Heart right ventricle (tissue), 16 donors: ENCODE measurements at regions of chr1 and their contacts with region 1.

Region 1: GRCh38 chr1:47997289-47998200 is at the start of gene TRABD2B:
- DNase-seq: peak; percentile 76 to 84
- ATAC-seq: peak; percentile 81 to 90 (median 87)
- H3K4me3 ChIP-seq: peak within 1 kb of the TSS; percentile 35 to 72 (median 62)
- H3K27ac ChIP-seq: peak within 1 kb of the TSS in 9 of 10 donors; percentile 22 to 69 (median 62)
- H3K4me1 ChIP-seq: peaks cover 0 to 22% (median 12%) of the 10 kb centered on the region in 9 donors
- H3K27me3 ChIP-seq: peaks cover 3 to 69% (median 45%) of the 10 kb centered on the region in 7 donors
- CTCF ChIP-seq: peak; percentile 90 to 99 (median 95)
- total RNA-seq, gene TRABD2B: 0.21 to 1.1 (median 0.53) TPM

Region 2: GRCh38 chr1:47738560-47739182 is 258.9 kb before region 1 on chr1:
- intact Hi-C with region 1: loop called in 4 of 10 experiments (anchors 5 to 10 kb)
- DNase-seq: peak; percentile 39 to 55
- ATAC-seq: peak; percentile 61 to 90 (median 76)
- H3K4me3 ChIP-seq: no peak overlapping the region
- H3K27ac ChIP-seq: no peak overlapping the region
- H3K4me1 ChIP-seq: peaks cover 0 to 3% (median 0%) of the 10 kb centered on the region in 9 donors
- H3K27me3 ChIP-seq: peaks cover 0 to 47% (median 36%) of the 10 kb centered on the region in 7 donors
- CTCF ChIP-seq: peak; percentile 50 to 83 (median 75)

Region 3: DNA sequence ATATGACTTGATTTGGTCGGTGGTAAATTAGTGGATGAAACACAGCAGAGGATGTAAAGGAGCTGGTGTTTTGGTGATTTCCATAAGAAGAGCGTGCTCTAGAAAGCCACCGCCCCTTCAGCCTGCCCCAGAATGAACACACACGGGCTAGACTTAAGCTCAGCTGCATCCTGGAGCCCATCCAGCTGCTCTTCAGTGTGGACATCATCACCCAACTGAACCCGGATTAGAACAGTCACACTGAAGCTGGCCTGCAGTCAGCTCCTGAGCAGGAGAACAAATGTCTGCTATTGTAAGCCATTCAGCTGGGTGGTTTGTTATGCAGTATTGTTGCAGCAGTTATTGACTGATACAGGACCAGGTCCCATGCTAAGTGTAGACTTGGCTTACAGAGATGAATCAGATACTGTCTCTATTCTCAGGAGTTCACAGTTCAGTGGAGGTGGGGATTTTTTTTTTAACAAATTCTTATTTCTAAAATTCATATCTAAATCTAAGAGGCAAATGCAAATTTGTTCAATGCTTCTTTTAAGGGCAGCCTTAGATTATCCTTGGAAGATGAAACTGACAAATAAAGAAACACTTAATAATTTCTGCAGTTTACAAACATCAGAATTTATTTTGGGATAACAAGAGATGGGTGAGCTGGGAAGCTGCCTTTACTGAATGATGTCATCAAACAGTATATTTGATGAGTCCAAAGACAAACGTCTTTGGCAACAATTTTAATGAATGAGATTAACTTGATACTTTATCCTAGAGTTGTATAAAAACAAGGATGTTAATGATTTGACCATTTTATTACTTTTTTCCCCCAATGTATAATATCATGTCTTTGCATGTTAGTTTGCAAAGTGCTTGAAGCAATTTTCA is 251.6 kb before region 1 on chr1:
- intact Hi-C with region 1: loop called in 2 of 10 experiments (anchors 10 kb)
- DNase-seq: no peak
- ATAC-seq: peak in 2 of 8 donors; percentile 41 to 71
- H3K4me3 ChIP-seq: no peak overlapping the region
- H3K27ac ChIP-seq: no peak overlapping the region
- H3K4me1 ChIP-seq: peaks cover 0 to 1% (median 0%) of the 10 kb centered on the region in 9 donors
- H3K27me3 ChIP-seq: peaks cover 0 to 25% (median 0%) of the 10 kb centered on the region in 7 donors
- CTCF ChIP-seq: no peak

Region 4: GRCh38 chr1:47785561-47786271 is 211.8 kb before region 1 on chr1:
- intact Hi-C with region 1: loop called in 5 of 10 experiments (anchors 5 to 10 kb)
- DNase-seq: peak; percentile 44 to 45
- ATAC-seq: peak; percentile 66 to 84 (median 80)
- H3K4me3 ChIP-seq: no peak overlapping the region
- H3K27ac ChIP-seq: peak overlapping the region in 3 of 10 donors; percentile 0 to 24 (median 4)
- H3K4me1 ChIP-seq: peaks cover 3 to 52% (median 32%) of the 10 kb centered on the region in 9 donors
- H3K27me3 ChIP-seq: no peaks in the 10 kb centered on the region
- CTCF ChIP-seq: peak in 8 of 9 donors; percentile 10 to 65 (median 46)

Region 5: DNA sequence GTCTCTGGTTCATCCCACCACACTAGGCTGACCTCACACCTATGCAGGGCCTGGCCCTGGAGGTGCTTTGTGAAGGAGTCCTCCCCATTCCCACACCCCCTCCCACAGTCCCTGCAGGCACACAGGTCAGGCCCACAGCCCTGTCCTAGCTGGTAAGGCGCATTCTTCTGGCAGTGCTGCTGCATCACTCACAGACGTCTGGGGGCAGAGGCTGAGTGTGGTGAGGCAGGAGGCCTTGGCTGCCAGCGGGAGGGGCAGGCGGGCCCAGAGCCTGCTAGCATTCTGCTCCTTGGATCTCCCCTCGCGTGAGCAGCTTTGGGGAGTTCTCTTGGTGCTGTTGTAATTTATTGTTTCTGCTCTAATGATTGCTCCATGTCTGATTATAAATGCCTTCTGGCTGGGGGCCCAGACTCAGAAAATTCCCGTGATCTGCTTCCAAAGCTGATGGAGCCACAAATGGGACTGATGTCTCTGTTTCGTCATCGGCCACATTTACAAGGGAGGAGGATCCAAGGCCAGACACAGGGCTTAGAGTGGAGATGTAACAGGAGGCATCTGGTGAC is 63.2 kb before region 1 on chr1:
- intact Hi-C with region 1: loop called in 1 of 10 experiments (anchors 2 kb)
- DNase-seq: peak; percentile 57 to 58
- ATAC-seq: peak; percentile 33 to 77 (median 55)
- H3K4me3 ChIP-seq: no peak overlapping the region
- H3K27ac ChIP-seq: peak overlapping the region in 3 of 10 donors; percentile 15 to 63 (median 19)
- H3K4me1 ChIP-seq: peaks cover 0 to 36% (median 11%) of the 10 kb centered on the region in 9 donors
- H3K27me3 ChIP-seq: peaks cover 0 to 3% (median 0%) of the 10 kb centered on the region in 7 donors
- CTCF ChIP-seq: no peak

Region 6: GRCh38 chr1:48039088-48040054 is 41.8 kb after region 1 on chr1:
- intact Hi-C with region 1: no loop called
- DNase-seq: no peak
- ATAC-seq: peak; percentile 23 to 71 (median 51)
- H3K4me3 ChIP-seq: no peak overlapping the region
- H3K27ac ChIP-seq: peak overlapping the region in 1 of 10 donors; percentile 10
- H3K4me1 ChIP-seq: peaks cover 0 to 32% (median 13%) of the 10 kb centered on the region in 9 donors
- H3K27me3 ChIP-seq: peaks cover 0 to 10% (median 4%) of the 10 kb centered on the region in 7 donors
- CTCF ChIP-seq: no peak

Region 7: DNA sequence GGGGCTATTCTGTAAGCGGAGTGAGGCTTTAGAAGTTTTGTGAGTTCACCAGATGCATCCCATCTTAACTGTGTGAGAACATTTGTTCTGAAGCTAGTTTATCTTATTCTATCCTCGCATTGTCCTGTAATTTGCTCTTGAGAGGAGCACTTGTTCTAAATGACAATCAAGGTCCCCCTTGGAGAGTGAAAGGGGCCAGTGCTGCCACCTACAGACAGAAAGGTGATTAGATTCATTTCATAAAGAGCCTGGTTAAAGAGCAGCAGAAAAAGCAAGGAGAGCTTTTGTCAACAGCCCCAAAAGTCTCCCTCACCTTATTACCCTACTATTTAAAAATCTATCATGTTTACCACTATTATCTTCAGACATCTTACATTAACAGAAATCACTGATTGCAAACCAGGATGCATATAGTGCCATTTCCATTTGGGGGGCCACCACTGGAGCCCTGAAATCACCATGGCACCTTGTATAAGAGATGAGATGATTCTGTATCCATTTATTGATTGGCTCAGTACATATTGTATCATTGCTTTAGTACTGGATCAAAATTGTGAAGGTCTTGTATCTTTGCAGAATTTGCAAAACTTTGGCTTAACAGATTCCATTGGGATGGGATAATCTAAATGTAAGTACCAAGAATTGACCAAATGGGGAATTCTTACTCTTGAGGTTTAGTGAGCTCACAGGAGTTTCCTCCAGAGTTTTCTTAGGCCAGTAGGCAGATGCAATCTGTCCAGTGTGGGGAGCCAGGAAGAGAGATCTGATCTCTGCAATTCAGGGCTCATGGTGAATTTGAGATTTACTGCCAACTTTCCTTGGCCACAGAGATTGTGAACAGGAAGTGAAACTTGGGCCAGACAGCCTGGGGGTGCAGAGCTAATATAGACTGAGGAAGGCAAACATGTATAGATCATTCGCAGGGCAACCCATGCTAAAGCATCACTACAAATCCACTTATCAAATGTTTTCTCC is 63.9 kb after region 1 on chr1:
- intact Hi-C with region 1: loop called in 8 of 10 experiments (anchors 1 to 2 kb)
- DNase-seq: peak in 1 of 2 donors; percentile 74
- ATAC-seq: peak in 6 of 8 donors; percentile 55 to 84 (median 68)
- H3K4me3 ChIP-seq: no peak overlapping the region
- H3K27ac ChIP-seq: no peak overlapping the region
- H3K4me1 ChIP-seq: peaks cover 0 to 8% (median 0%) of the 10 kb centered on the region in 9 donors
- H3K27me3 ChIP-seq: peaks cover 0 to 45% (median 6%) of the 10 kb centered on the region in 7 donors
- CTCF ChIP-seq: peak; percentile 51 to 82 (median 76)

Region 8: GRCh38 chr1:48093696-48094528 is 96.4 kb after region 1 on chr1:
- intact Hi-C with region 1: no loop called
- DNase-seq: peak; percentile 29 to 35
- ATAC-seq: peak in 2 of 8 donors; percentile 42 to 62
- H3K4me3 ChIP-seq: no peak overlapping the region
- H3K27ac ChIP-seq: no peak overlapping the region
- H3K4me1 ChIP-seq: no peaks in the 10 kb centered on the region
- H3K27me3 ChIP-seq: peaks cover 0 to 73% (median 45%) of the 10 kb centered on the region in 7 donors
- CTCF ChIP-seq: peak; percentile 41 to 74 (median 67)

Region 9: DNA sequence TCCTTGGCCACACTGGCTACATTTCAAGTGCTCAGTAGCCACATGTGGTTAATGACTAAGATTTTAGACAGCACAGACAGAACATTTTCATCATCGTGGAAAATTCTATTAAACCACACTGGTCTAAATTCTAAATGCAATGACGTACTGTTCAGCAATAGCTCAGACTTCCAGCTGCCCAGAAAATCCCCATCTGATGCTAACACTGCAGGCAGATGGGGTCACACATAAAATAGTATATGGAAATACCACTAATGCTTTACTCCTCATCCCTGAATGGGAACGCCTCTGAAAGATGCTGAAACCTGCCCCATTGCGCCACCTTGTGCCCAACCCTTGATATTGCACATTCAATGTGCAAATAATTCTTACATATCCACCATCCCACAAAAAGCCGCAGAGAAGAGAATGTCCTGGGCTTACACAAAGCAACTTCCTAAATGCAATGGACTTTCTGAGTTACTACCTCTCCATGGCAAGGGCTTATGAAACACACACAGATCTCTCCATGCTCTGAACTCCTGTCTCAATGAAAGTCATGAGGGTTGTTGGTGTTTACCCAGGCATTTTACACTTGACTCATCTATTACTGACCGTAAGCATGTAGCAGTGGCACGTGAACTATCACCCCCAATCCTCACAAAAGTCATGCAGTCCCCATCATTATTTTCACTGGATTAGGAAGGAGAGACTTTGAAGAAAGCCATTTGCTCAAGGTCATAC is 204.6 kb after region 1 on chr1:
- intact Hi-C with region 1: loop called in 1 of 10 experiments (anchors 10 kb)
- DNase-seq: peak; percentile 57
- ATAC-seq: peak in 7 of 8 donors; percentile 54 to 68 (median 58)
- H3K4me3 ChIP-seq: no peak overlapping the region
- H3K27ac ChIP-seq: no peak overlapping the region
- H3K4me1 ChIP-seq: peaks cover 0 to 5% (median 0%) of the 10 kb centered on the region in 9 donors
- H3K27me3 ChIP-seq: peaks cover 0 to 9% (median 0%) of the 10 kb centered on the region in 7 donors
- CTCF ChIP-seq: peak; percentile 68 to 88 (median 85)